IMR-90 (cell line): ENCODE measurements at regions of chr7 and their contacts with region 1.

Region 1: GRCh38 chr7:73683056-73683964 is at the starts of genes BUD23 and DNAJC30:
- DNase-seq: peak; percentile 95
- ATAC-seq: peak; percentile 98
- H3K4me3 ChIP-seq: peak within 1 kb of the TSS; percentile 96
- H3K27ac ChIP-seq: peak within 1 kb of the TSS; percentile 93
- H3K4me1 ChIP-seq: peaks cover 13% of the 10 kb centered on the region
- H3K27me3 ChIP-seq: no peaks in the 10 kb centered on the region
- CTCF ChIP-seq: no peak
- POLR2A ChIP-seq: peak; percentile 93
- RAD21 ChIP-seq: no peak
- total RNA-seq, gene BUD23: 35.7 and 40.8 TPM in 2 replicates
- total RNA-seq, gene DNAJC30: 1.6 and 1.7 TPM in 2 replicates

Region 2: GRCh38 chr7:73606801-73607691 is 76.3 kb before region 1 on chr7:
- CTCF ChIA-PET with region 1: no interaction called
- POLR2A ChIA-PET with region 1: no interaction called
- dilution Hi-C with region 1: no loop called
- in situ Hi-C with region 1: loop called (anchors 5 kb)
- intact Hi-C with region 1: loop called (anchors 1 kb)
- DNase-seq: peak; percentile 10
- ATAC-seq: peak; percentile 84
- H3K4me3 ChIP-seq: no peak overlapping the region
- H3K27ac ChIP-seq: no peak overlapping the region
- H3K4me1 ChIP-seq: no peaks in the 10 kb centered on the region
- H3K27me3 ChIP-seq: peaks cover 13% of the 10 kb centered on the region; the same call in 1 of the 2 replicates
- CTCF ChIP-seq: peak; percentile 89
- POLR2A ChIP-seq: no peak
- RAD21 ChIP-seq: peak; percentile 87

Region 3: GRCh38 chr7:73718905-73719805 is 35.8 kb after region 1 on chr7 and contains the start of gene STX1A:
- CTCF ChIA-PET with region 1: no interaction called
- POLR2A ChIA-PET with region 1: no interaction called
- dilution Hi-C with region 1: no loop called
- in situ Hi-C with region 1: no loop called
- intact Hi-C with region 1: loop called (anchors 5 kb)
- DNase-seq: peak; percentile 59
- ATAC-seq: peak; percentile 84
- H3K4me3 ChIP-seq: peak within 1 kb of the TSS; percentile 65
- H3K27ac ChIP-seq: peak within 1 kb of the TSS; percentile 47; the same call in 1 of the 2 replicates
- H3K4me1 ChIP-seq: peaks cover 28% of the 10 kb centered on the region
- H3K27me3 ChIP-seq: no peaks in the 10 kb centered on the region
- CTCF ChIP-seq: no peak
- POLR2A ChIP-seq: peak; percentile 77
- RAD21 ChIP-seq: no peak
- total RNA-seq, gene STX1A: 9.3 and 10.0 TPM in 2 replicates